Endothelial cell of umbilical vein (primary cell): ENCODE measurements at regions of chr6 and their contacts with region 1.

Region 1: GRCh38 chr6:130858498-130859160 is 31.4 kb downstream of the SMLR1 start:
- DNase-seq: no peak
- H3K4me3 ChIP-seq: no peak overlapping the region
- H3K27ac ChIP-seq: no peak overlapping the region
- H3K4me1 ChIP-seq: no peaks in the 10 kb centered on the region
- H3K27me3 ChIP-seq: no peaks in the 10 kb centered on the region
- CTCF ChIP-seq: no peak
- POLR2A ChIP-seq: no peak

Region 2: GRCh38 chr6:130872250-130873095 is 13.8 kb after region 1 on chr6:
- CTCF ChIA-PET with region 1: interaction called, 39 read pairs
- POLR2A ChIA-PET with region 1: no interaction called
- dilution Hi-C with region 1: no loop called
- intact Hi-C with region 1: no loop called
- DNase-seq: peak; percentile 51
- H3K4me3 ChIP-seq: no peak overlapping the region
- H3K27ac ChIP-seq: no peak overlapping the region
- H3K4me1 ChIP-seq: no peaks in the 10 kb centered on the region
- H3K27me3 ChIP-seq: no peaks in the 10 kb centered on the region
- CTCF ChIP-seq: peak; percentile 85 to 90
- POLR2A ChIP-seq: no peak